Colonic mucosa (tissue), 4 donors: ENCODE measurements at regions of chr2 and their contacts with region 1.

Region 1: GRCh38 chr2:8693155-8693821 is 11.4 kb downstream of the ID2 start:
- DNase-seq: peak; percentile 82
- H3K4me3 ChIP-seq: peak overlapping the region; percentile 26
- H3K27ac ChIP-seq: no peak overlapping the region
- H3K4me1 ChIP-seq: no peaks in the 10 kb centered on the region
- H3K27me3 ChIP-seq: no peaks in the 10 kb centered on the region
- CTCF ChIP-seq: peak; percentile 68

Region 2: DNA sequence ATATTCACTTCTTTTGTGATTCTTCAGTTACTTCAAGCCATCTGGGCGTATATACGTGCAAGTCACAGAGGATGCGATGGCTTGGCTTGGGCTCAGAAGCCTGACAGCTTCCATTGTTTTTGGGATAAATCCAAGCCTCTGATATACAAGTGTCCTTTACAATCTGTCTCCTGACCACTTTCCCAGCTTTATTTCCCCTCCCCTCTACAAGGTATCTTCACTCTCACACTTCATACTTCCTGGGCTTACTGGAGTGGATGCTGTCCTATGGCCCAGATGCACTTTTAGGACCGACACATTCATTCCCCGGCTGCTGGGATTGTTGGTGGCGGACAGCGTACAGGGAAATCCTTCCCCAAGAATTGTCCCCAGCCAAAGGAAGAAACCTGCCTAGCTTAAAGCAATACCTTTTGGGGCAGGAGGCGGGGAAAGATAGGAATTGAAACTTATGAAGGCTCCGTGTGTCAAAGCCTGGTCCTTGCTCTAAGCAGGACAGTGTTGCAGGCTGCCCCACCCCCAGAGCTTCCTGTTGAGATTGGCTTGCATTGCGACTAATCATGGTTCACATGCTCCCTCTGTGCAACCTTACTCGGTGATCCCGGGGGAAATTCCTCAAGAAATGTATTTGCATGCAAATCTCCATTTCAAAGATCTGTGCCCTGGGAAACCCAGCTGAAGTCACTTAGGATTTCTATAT is 814.4 kb before region 1 on chr2:
- intact Hi-C with region 1: no loop called
- DNase-seq: no peak
- H3K4me3 ChIP-seq: no peak overlapping the region
- H3K27ac ChIP-seq: no peak overlapping the region
- H3K4me1 ChIP-seq: no peaks in the 10 kb centered on the region
- H3K27me3 ChIP-seq: no peaks in the 10 kb centered on the region
- CTCF ChIP-seq: no peak

Region 3: DNA sequence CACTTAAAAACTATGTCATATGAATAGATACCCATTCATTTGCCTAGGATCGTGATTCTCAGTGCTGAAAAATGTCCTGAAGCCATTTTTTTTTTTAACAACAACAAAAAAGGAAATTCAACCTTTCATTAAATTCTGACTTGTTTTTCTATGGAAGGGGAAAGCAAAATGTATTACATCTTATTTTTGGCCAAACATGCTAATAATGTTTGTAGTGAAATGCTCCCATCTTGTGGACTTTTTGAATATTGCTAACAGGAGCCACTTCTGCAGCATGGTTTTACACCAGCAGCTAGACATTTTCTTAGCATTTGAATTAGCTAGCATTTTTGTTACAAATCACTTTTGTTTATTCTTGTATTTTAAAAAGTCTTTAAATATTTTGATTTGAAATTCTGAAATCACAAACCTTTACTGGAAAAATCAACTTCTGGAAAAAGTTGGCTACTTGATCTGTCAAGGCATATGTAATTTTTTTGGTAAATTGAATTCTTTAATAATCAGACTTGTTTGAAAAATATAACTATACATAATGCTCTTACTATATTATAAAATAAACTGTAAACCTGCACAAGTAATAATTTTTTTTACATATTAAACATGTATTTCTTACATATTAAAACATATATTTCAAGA is 68.4 kb after region 1 on chr2:
- intact Hi-C with region 1: loop called (anchors 10 kb)
- DNase-seq: no peak
- H3K4me3 ChIP-seq: no peak overlapping the region
- H3K27ac ChIP-seq: no peak overlapping the region
- H3K4me1 ChIP-seq: no peaks in the 10 kb centered on the region
- H3K27me3 ChIP-seq: no peaks in the 10 kb centered on the region
- CTCF ChIP-seq: peak; percentile 28